Lower leg skin (tissue), 4 donors: ENCODE measurements at regions of chr3 and their contacts with region 1.

Region 1: DNA sequence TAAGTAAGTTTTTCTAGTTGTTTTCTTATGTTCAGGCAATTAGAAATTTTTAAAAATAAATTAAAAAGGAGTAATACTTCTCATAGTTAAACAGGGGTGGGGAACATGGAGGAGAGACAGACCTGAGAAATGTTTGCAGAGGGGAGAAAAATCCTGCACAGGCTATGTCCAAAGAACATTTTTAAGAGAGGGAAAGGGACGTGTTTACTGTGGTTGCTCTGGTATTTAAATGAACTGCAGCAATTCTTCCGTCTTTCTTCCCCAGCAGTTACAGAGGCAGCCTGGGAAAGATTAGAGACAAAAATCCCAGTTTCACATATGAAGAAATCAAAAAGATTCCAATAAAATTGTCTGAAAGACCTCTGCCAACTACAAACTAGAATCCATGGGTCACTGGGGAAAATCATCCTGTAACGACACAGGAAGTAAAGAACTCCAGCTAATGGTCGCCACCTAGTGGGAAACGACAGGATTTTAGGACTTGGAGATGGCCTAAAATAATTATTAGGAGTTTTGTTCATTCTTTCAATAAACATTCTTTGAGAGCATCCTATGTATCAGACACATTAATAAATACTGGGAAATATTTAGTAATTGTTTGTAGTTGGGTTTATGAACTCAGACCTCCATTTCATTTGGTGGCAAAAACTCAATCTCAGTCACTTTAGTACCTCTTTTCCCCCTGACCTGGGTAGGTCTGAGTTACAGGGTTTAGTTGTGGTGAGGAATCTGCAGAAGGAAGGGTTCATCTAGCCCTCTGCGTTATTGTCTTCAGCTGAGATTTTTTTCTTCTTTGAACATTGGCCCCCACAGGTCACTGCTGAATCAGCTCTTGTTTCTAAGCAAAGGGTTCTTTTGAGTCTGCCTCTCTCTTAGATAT is 69.9 kb upstream of the GOLIM4 start:
- DNase-seq: peak; percentile 66 to 85
- H3K4me3 ChIP-seq: no peak overlapping the region
- CTCF ChIP-seq: peak in 1 of 3 donors; percentile 78
- POLR2A ChIP-seq: no peak

Region 2: GRCh38 chr3:168047190-168047795 is 118.3 kb before region 1 on chr3:
- intact Hi-C with region 1: loop called (anchors 2 kb)
- DNase-seq: no peak
- H3K4me3 ChIP-seq: no peak overlapping the region
- CTCF ChIP-seq: peak in 1 of 3 donors; percentile 78
- POLR2A ChIP-seq: no peak